ENCODE measurements at regions of chr11 and their contacts with region 1.

Region 1: DNA sequence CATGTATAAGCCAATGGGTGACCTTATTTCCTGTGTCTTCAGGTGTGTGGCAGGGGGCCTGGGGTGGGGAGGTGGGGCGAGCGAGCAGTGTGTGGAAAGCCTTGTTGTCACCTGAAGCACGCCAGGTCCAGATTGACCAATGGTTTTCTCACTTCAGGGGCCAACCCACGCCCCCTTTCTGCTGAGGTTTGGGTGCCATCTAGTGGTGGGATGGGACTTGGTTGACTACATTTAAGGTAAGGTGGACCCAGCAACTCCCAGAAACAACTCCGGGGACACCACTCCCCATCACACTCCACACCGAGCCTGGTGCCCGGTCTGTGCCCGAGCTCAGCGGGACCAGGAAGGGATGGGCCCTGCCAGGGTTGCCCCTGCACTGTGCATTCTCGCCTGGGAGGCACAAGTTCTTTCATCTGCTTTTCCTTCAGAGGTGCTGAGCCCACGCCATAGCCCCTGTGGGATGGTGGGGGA is 40.0 kb downstream of the TPCN2 start:
- DNase-seq: peak; percentile 88
- H3K4me3 Mint-ChIP-seq: no peak overlapping the region
- H3K27ac Mint-ChIP-seq: peak overlapping the region; percentile 23
- H3K4me1 Mint-ChIP-seq: peaks cover 8% of the 10 kb centered on the region
- H3K27me3 Mint-ChIP-seq: no peaks in the 10 kb centered on the region
- CTCF ChIP-seq: peak; percentile 72

Region 2: DNA sequence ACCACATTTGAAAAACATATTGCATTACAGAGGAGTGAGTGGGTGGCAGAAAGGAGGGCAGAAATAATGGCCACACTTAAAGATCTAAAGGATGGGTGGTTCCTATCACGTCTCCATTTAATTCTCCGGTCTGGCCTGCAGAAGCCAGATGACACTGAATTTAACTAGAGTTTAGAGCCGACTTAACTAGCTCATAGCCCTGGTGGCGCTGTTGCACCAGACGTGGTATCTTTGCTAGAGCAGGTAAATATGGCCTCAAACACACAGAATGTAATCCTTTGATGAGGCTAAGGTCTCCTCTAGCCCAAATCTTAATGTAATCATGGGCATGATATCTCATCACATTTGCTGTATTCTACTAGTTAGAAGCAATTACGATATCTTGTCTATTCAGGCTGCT is 455.9 kb before region 1 on chr11:
- CTCF ChIA-PET with region 1: no interaction called
- POLR2A ChIA-PET with region 1: no interaction called
- intact Hi-C with region 1: loop called (anchors 1 kb)
- DNase-seq: peak; percentile 79
- H3K4me3 Mint-ChIP-seq: no peak overlapping the region
- H3K27ac Mint-ChIP-seq: no peak overlapping the region
- H3K4me1 Mint-ChIP-seq: no peaks in the 10 kb centered on the region
- H3K27me3 Mint-ChIP-seq: peaks cover 35% of the 10 kb centered on the region
- CTCF ChIP-seq: peak; percentile 61

Region 3: DNA sequence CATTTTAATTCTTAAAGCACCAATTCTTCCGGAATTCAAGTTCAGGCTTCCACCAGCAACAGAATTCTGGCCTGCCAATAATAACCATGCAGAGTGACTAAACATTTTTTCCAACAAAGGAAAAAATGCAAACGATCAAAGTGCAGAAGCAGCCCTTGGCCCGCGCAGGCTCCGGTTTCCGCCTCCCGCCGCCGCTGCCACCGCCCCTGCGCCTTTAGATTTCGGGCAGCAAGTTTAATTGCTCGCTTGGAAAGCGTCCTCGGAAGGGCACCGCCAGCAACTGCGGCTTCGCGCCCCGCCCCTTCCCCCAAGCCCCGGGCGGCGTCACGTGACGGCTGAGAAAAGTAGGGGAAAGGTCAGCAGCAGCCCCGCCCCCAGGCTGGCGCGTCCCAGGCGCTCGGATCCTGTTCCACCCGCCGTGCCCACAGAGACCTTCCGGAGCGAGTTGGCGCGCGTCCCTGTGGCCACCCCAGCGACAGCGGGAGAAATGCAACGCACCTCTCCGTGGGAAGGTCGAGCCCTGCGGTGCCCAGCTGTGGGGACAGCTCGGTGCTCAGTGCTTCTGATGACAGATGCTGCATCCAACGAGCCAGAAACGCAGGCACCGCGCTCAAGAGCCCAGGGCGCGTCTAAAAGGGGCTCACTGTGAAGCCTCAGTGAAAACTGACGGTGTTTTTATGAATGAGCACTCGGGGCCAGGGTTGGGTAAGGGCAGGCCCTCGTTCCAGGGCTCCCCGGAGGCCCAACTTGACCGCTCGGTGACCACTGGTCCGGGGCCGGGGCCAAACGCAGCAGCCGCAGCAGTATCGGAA is 249.5 kb before region 1 on chr11:
- CTCF ChIA-PET with region 1: interaction called, 3 read pairs
- POLR2A ChIA-PET with region 1: no interaction called
- intact Hi-C with region 1: loop called (anchors 10 kb)
- DNase-seq: peak; percentile 93
- H3K4me3 Mint-ChIP-seq: peak overlapping the region; percentile 73
- H3K27ac Mint-ChIP-seq: peak overlapping the region; percentile 27
- H3K4me1 Mint-ChIP-seq: peaks cover 24% of the 10 kb centered on the region
- H3K27me3 Mint-ChIP-seq: no peaks in the 10 kb centered on the region
- CTCF ChIP-seq: no peak

Region 4: DNA sequence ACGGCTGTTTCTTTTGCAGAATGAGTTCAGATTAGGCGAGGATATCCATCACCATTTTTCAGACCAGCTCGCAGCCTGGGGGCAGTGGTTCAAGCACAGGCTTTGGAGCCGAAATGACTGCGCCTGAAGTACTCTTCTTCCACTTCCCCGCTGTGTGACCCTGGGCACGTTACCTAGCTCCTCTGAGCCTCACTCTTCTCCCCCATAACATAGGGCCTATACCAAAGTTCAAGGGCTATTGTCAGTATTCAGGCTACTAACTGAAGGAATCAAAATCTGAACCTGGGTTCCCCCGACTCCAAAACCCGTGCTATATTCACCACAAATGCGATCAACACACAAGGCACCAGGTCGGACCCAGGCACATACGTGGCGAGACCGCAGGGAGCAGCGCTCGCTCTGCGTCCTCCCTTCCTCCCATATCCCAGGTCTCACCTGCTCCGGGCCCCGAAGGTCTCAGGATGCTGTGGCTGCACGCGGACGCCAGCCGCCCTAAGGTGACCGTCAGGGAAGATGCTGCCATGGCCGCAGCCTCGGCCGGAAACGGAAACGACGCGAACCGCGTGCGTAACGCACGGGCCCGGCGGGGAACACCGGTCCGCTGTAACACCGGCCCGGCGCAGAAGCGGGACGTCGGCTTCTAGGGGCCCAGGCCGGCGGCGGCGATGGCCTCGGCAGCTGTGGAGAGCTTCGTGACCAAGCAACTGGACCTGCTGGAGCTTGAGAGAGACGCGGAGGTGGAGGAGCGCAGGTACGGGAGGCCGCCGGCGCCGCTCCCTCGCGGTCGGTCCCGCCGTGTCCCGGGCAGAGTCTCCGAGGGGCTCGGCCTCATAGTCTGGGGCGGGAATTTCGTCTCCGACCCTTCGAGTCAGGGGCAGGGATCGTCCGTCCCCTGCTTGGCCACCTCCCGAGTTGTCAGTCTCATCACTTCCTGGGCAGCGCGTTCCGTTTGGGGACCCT is 185.1 kb before region 1 on chr11 and contains the starts of genes IGHMBP2 and MRPL21:
- CTCF ChIA-PET with region 1: no interaction called
- POLR2A ChIA-PET with region 1: interaction called, 4 read pairs
- intact Hi-C with region 1: loop called (anchors 2 kb)
- DNase-seq: peak; percentile 79
- H3K4me3 Mint-ChIP-seq: peak within 1 kb of the TSS; percentile 96
- H3K27ac Mint-ChIP-seq: peak within 1 kb of the TSS; percentile 83
- H3K4me1 Mint-ChIP-seq: peaks cover 31% of the 10 kb centered on the region
- H3K27me3 Mint-ChIP-seq: no peaks in the 10 kb centered on the region
- CTCF ChIP-seq: no peak
- total RNA-seq, gene IGHMBP2: 19.8 and 29.4 TPM in 2 replicates
- total RNA-seq, gene MRPL21: 80.2 and 96.5 TPM in 2 replicates

Region 5: DNA sequence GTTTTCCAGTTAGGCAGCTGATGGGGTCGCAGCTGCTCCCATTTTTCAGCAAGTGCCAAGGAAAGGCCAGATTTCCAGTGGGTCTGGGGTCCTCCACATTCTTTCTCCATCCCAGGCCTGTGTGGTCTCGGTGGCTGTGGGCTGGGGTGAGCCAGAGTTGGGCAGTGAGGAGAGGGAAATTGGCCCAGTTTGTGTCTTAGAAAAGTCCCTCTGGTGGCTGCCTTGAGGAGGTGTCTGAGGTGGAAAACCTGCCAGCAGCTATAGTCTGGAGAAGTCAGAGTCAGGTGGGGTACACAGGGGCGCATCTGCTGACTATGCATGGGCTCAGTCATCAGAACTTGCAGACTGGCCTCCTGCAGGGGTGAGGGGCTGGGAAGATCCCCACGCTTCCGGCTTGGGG is 138.4 kb before region 1 on chr11:
- CTCF ChIA-PET with region 1: no interaction called
- POLR2A ChIA-PET with region 1: no interaction called
- intact Hi-C with region 1: loop called (anchors 1 kb)
- DNase-seq: peak; percentile 23
- H3K4me3 Mint-ChIP-seq: no peak overlapping the region
- H3K27ac Mint-ChIP-seq: no peak overlapping the region
- H3K4me1 Mint-ChIP-seq: no peaks in the 10 kb centered on the region
- H3K27me3 Mint-ChIP-seq: peaks cover 11% of the 10 kb centered on the region
- CTCF ChIP-seq: peak; percentile 17

Region 6: GRCh38 chr11:69044111-69045013 is 44.3 kb before region 1 on chr11:
- CTCF ChIA-PET with region 1: no interaction called
- POLR2A ChIA-PET with region 1: no interaction called
- intact Hi-C with region 1: loop called (anchors 5 kb)
- DNase-seq: peak; percentile 71
- H3K4me3 Mint-ChIP-seq: no peak overlapping the region
- H3K27ac Mint-ChIP-seq: no peak overlapping the region
- H3K4me1 Mint-ChIP-seq: no peaks in the 10 kb centered on the region
- H3K27me3 Mint-ChIP-seq: no peaks in the 10 kb centered on the region
- CTCF ChIP-seq: no peak

Measured in MCF 10A (cell line).